AG04449 (cell line): ENCODE measurements at regions of chr7 and their contacts with region 1.

Region 1: GRCh38 chr7:97117372-97118188 is at the start of gene SDHAF3:
- DNase-seq: peak; percentile 84
- H3K4me3 ChIP-seq: peak within 1 kb of the TSS; percentile 97
- CTCF ChIP-seq: peak; percentile 15

Region 2: DNA sequence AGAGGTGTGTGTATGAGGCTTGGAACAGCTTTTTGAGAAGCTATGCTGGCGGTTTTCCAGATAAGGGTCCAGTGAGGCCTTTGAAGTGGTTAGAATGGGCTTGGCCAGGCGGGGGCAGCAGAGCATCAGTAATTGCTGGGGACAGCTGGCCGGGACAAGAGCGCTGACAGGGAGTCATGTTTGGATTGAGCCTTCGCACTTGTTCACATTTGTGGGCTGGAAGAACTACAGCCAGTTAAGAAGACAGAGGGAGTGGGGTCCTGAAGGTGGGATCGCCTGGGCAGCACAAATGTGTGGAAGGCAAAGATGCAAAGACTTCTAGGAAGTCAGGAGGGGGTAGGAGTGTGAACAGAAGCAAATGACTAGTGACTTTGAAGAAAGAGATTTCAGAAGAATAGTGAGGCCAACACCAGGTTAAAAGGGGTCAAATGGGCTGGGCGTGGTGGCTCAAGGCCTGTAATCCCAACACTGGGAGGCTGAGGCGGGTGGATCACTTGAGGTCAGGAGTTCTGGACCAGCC is 12.8 kb before region 1 on chr7:
- CTCF ChIA-PET with region 1: interaction called, 41 read pairs
- POLR2A ChIA-PET with region 1: interaction called, 3 read pairs
- DNase-seq: no peak
- H3K4me3 ChIP-seq: no peak overlapping the region
- CTCF ChIP-seq: peak; percentile 69

Region 3: GRCh38 chr7:97317575-97317974 is 200.0 kb after region 1 on chr7:
- CTCF ChIA-PET with region 1: no interaction called
- POLR2A ChIA-PET with region 1: no interaction called
- DNase-seq: no peak
- H3K4me3 ChIP-seq: no peak overlapping the region
- CTCF ChIP-seq: no peak